Natural killer cell (primary cell): ENCODE measurements at regions of chr15 and their contacts with region 1.

Region 1: GRCh38 chr15:64067564-64068030 is 21.3 kb upstream of the DAPK2 start:
- DNase-seq: peak; percentile 60 to 85
- ATAC-seq: peak; percentile 90 to 96 (median 95)
- H3K4me3 ChIP-seq: no peak overlapping the region
- H3K4me3 Mint-ChIP-seq: no peak overlapping the region
- H3K27ac ChIP-seq: no peak overlapping the region
- H3K27ac Mint-ChIP-seq: no peak overlapping the region
- H3K4me1 ChIP-seq: peaks cover 5% of the 10 kb centered on the region
- H3K4me1 Mint-ChIP-seq: peaks cover 0 to 10% of the 10 kb centered on the region in 2 donors
- H3K27me3 ChIP-seq: no peaks in the 10 kb centered on the region
- H3K27me3 Mint-ChIP-seq: no peaks in the 10 kb centered on the region
- CTCF ChIP-seq: peak; percentile 84

Region 2: GRCh38 chr15:63466378-63467192 is 601.0 kb before region 1 on chr15:
- intact Hi-C with region 1: loop called (anchors 1 kb)
- DNase-seq: peak; percentile 26 to 89
- ATAC-seq: peak; percentile 86 to 97 (median 97)
- H3K4me3 ChIP-seq: no peak overlapping the region
- H3K4me3 Mint-ChIP-seq: no peak overlapping the region
- H3K27ac ChIP-seq: no peak overlapping the region
- H3K27ac Mint-ChIP-seq: no peak overlapping the region
- H3K4me1 ChIP-seq: peaks cover 6% of the 10 kb centered on the region
- H3K4me1 Mint-ChIP-seq: peaks cover 0 to 9% of the 10 kb centered on the region in 2 donors
- H3K27me3 ChIP-seq: no peaks in the 10 kb centered on the region
- H3K27me3 Mint-ChIP-seq: peaks cover 6 to 23% of the 10 kb centered on the region in 2 donors
- CTCF ChIP-seq: peak; percentile 74

Region 3: GRCh38 chr15:63610200-63610841 is 457.3 kb before region 1 on chr15:
- intact Hi-C with region 1: loop called (anchors 1 kb)
- DNase-seq: peak; percentile 59 to 87
- ATAC-seq: peak; percentile 91 to 96 (median 91)
- H3K4me3 ChIP-seq: no peak overlapping the region
- H3K4me3 Mint-ChIP-seq: peak overlapping the region; percentile 18
- H3K27ac ChIP-seq: peak overlapping the region; percentile 59
- H3K27ac Mint-ChIP-seq: peak overlapping the region; percentile 90
- H3K4me1 ChIP-seq: peaks cover 22% of the 10 kb centered on the region
- H3K4me1 Mint-ChIP-seq: peaks cover 27% of the 10 kb centered on the region in 2 donors
- H3K27me3 ChIP-seq: no peaks in the 10 kb centered on the region
- H3K27me3 Mint-ChIP-seq: no peaks in the 10 kb centered on the region
- CTCF ChIP-seq: peak; percentile 80

Region 4: GRCh38 chr15:63752075-63752684 is 315.4 kb before region 1 on chr15:
- intact Hi-C with region 1: loop called (anchors 1 kb)
- DNase-seq: peak in 1 of 2 donors; percentile 73
- ATAC-seq: peak; percentile 78 to 94 (median 84)
- H3K4me3 ChIP-seq: no peak overlapping the region
- H3K4me3 Mint-ChIP-seq: no peak overlapping the region
- H3K27ac ChIP-seq: no peak overlapping the region
- H3K27ac Mint-ChIP-seq: peak overlapping the region in 1 of 2 donors; percentile 12
- H3K4me1 ChIP-seq: no peaks in the 10 kb centered on the region
- H3K4me1 Mint-ChIP-seq: no peaks in the 10 kb centered on the region
- H3K27me3 ChIP-seq: no peaks in the 10 kb centered on the region
- H3K27me3 Mint-ChIP-seq: no peaks in the 10 kb centered on the region
- CTCF ChIP-seq: peak; percentile 74

Region 5: DNA sequence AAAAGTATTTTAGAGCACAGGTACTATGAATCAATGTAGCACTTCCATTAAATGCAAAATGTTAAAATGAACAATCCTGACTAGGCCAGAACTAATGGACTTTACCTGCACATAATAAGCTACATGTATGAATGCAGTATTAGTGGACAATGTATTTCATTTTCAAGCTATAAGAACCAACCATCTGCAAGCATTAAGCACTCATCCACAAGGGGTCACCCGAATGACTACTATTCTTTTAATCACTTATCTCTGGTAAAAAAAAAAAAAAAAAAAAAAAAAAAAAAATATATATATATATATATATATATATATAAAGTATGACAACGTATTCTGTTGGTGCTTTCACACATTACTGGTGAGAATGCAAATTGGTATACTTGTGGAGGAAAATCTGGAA is 241.1 kb before region 1 on chr15:
- intact Hi-C with region 1: loop called (anchors 1 kb)
- DNase-seq: peak in 1 of 2 donors; percentile 72
- ATAC-seq: peak in 2 of 3 donors; percentile 61 to 64
- H3K4me3 ChIP-seq: no peak overlapping the region
- H3K4me3 Mint-ChIP-seq: no peak overlapping the region
- H3K27ac ChIP-seq: no peak overlapping the region
- H3K27ac Mint-ChIP-seq: peak overlapping the region; percentile 1 to 67
- H3K4me1 ChIP-seq: peaks cover 7% of the 10 kb centered on the region
- H3K4me1 Mint-ChIP-seq: peaks cover 80 to 82% of the 10 kb centered on the region in 2 donors
- H3K27me3 ChIP-seq: no peaks in the 10 kb centered on the region
- H3K27me3 Mint-ChIP-seq: no peaks in the 10 kb centered on the region
- CTCF ChIP-seq: peak; percentile 47